ENCODE measurements at regions of chr19 and their contacts with region 1.

Region 1: DNA sequence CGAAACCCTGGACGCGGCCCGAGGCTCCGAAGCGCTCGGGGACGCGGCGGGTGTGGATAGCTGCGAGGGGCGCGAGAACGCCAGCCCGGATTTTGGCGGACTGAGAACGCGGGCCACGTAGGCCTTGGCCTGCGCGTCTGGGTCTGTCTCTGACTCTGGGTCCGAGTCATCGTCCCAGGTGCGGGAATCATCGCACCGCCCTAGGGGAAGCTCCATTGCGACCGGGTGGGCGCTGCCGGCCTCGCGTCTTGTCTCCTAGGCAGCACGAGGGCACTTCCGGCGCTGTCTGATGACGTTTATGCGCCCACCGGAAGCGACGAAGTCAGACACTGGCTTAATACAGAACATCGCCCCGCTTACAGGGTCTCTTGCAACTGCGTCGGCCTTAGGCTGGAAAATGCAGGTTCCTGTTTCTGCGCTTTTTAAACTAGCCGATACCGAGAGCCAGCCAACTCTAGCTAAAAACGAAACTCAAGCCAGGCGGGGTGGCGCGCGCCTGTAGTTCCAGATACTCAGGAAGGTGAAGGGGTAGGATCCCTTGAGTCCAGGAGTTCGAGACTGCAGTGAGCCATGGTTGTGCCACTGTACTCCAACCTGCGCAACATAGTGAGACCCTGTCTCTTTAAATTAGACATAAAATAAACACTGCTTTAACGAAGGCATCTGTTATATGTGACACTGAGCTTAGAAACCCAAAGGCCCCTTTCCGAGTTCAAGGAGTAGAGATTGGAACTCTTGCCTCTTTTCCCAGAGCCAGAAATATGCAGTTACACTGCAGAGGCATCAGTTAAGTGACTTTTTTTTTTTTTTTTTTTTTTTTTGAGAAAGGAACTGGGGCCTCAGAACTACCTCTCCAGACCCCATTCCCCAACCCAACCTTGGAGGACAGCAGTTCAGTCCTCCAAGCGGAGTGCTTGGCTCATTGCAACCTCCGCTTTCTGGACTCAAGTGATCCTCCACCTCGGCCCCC is at the start of gene FBXW9:
- DNase-seq: peak; percentile 98
- ATAC-seq: peak; percentile 88
- H3K4me3 Mint-ChIP-seq: peak within 1 kb of the TSS; percentile 91
- H3K27ac Mint-ChIP-seq: peak within 1 kb of the TSS; percentile 97
- H3K4me1 Mint-ChIP-seq: peaks cover 11% of the 10 kb centered on the region
- H3K27me3 Mint-ChIP-seq: no peaks in the 10 kb centered on the region
- CTCF ChIP-seq: no peak
- total RNA-seq, gene FBXW9: 4.7 and 5.2 TPM in 2 replicates

Region 2: GRCh38 chr19:12581100-12581499 is 115.6 kb before region 1 on chr19:
- CTCF ChIA-PET with region 1: no interaction called
- POLR2A ChIA-PET with region 1: no interaction called
- intact Hi-C with region 1: no loop called
- DNase-seq: no peak
- ATAC-seq: no peak
- H3K4me3 Mint-ChIP-seq: no peak overlapping the region
- H3K27ac Mint-ChIP-seq: no peak overlapping the region
- H3K4me1 Mint-ChIP-seq: peaks cover 3% of the 10 kb centered on the region
- H3K27me3 Mint-ChIP-seq: no peaks in the 10 kb centered on the region
- CTCF ChIP-seq: no peak

Region 3: DNA sequence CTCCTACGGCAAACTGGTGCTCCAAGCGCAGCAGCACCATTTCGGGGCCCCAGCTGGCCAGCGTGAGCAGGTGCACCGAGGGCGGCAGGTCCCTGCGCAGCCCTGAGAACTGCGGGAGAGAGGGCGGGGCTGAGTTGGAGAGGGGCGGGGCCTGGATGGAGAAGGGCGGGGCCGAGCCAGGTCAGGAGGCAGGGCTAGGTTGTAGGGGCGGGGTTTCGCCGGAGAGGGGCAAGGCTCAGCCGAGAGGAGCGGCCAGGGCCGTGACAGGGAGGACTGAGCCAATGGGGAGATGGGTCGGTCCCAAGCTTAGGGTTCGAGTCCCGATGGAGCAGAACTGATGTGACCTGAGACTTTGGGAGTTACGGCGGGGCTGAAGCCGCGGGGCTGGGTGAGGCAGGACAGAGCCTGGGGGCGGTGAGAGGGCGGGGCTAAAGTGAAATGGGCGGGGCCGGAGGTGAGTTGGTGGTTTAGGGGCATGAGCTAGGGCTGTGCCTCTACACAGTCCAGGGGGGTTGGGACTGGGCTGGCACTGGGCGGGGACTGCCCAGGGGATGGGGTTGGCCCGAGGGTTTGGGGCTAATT is 49.1 kb before region 1 on chr19:
- CTCF ChIA-PET with region 1: no interaction called
- POLR2A ChIA-PET with region 1: no interaction called
- intact Hi-C with region 1: loop called (anchors 1 kb)
- DNase-seq: no peak
- ATAC-seq: peak; percentile 83
- H3K4me3 Mint-ChIP-seq: no peak overlapping the region
- H3K27ac Mint-ChIP-seq: no peak overlapping the region
- H3K4me1 Mint-ChIP-seq: peaks cover 8% of the 10 kb centered on the region
- H3K27me3 Mint-ChIP-seq: no peaks in the 10 kb centered on the region
- CTCF ChIP-seq: no peak

Region 4: DNA sequence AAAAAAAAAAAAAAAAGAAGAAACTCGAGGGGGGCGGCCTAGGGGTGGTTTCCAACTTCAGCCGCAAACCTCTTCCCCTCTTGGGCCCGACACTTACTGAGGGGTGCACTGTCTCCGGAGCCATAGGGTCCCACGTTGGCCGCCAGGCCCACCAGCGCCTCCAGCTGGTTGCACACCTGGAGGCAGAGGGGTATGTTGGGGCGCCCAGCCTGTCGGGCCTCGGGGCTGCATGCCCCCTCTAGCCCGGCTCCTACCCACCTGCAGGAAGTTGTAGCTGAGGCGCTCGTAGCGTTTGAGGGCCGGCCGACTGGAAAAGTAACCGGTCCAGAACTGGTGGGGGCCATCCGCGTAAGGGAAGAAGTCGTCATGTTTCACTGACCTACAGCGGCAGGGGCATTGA is 38.7 kb before region 1 on chr19:
- CTCF ChIA-PET with region 1: no interaction called
- POLR2A ChIA-PET with region 1: no interaction called
- intact Hi-C with region 1: no loop called
- DNase-seq: no peak
- ATAC-seq: no peak
- H3K4me3 Mint-ChIP-seq: no peak overlapping the region
- H3K27ac Mint-ChIP-seq: no peak overlapping the region
- H3K4me1 Mint-ChIP-seq: peaks cover 2% of the 10 kb centered on the region
- H3K27me3 Mint-ChIP-seq: no peaks in the 10 kb centered on the region
- CTCF ChIP-seq: no peak

Region 5: GRCh38 chr19:12722566-12723380 is 26.1 kb after region 1 on chr19:
- CTCF ChIA-PET with region 1: no interaction called
- POLR2A ChIA-PET with region 1: interaction called, 14 read pairs
- intact Hi-C with region 1: loop called (anchors 1 kb)
- DNase-seq: peak; percentile 75
- ATAC-seq: peak; percentile 84
- H3K4me3 Mint-ChIP-seq: peak overlapping the region; percentile 92
- H3K27ac Mint-ChIP-seq: peak overlapping the region; percentile 90
- H3K4me1 Mint-ChIP-seq: peaks cover 43% of the 10 kb centered on the region
- H3K27me3 Mint-ChIP-seq: no peaks in the 10 kb centered on the region
- CTCF ChIP-seq: no peak